HepG2 (cell line): ENCODE measurements at regions of chr10 and their contacts with region 1.

Region 1: DNA sequence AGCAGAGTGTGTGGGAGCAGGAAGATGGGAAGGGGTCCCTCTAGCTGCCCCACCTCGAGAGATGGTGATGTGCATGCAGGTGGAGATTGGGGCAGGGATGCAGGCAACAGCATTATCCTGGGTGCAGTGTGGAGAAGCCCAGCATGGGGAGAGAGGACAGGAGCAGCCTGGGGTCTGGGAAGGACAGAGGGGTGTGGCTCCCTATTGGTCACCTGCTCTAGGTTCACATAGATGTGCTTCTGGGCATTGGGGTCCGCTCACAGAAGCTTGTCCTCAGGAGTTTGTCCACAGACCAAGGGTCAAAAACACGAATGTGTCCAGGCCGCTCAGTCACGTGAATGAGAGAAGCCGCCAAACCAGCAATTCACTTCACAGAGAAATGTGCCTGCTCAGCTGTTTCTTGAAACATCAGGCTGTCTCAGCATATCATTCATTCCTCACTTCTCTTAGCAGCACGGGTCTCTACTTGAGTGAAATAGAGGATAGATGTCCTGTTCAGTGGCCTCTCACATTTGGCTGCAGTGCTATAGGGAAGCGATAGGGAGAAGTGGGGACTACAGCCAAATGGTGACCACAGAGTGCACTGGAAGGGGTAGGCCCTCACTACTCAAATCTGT is 11.5 kb upstream of the SLC29A3 start:
- DNase-seq: no peak
- ATAC-seq: no peak; the same call in 2 of the 3 replicates
- H3K4me3 ChIP-seq: no peak overlapping the region
- H3K27ac ChIP-seq: no peak overlapping the region
- H3K4me1 ChIP-seq: peaks cover 20% of the 10 kb centered on the region; the same call in 1 of the 2 replicates
- H3K27me3 ChIP-seq: peaks cover 3 to 4% of the 10 kb centered on the region in 2 experiments; a peak in 2 of 5 replicates
- CTCF ChIP-seq: no peak
- EP300 ChIP-seq: no peak
- POLR2A ChIP-seq: no peak
- RAD21 ChIP-seq: no peak

Region 2: GRCh38 chr10:71094712-71095390 is 212.7 kb before region 1 on chr10:
- CTCF ChIA-PET with region 1: no interaction called
- POLR2A ChIA-PET with region 1: no interaction called
- in situ Hi-C with region 1: no loop called
- intact Hi-C with region 1: no loop called
- DNase-seq: no peak
- ATAC-seq: no peak
- H3K4me3 ChIP-seq: no peak overlapping the region
- H3K27ac ChIP-seq: no peak overlapping the region
- H3K4me1 ChIP-seq: no peaks in the 10 kb centered on the region
- H3K27me3 ChIP-seq: peaks cover 1 to 9% of the 10 kb centered on the region in 2 experiments; a peak in 2 of 5 replicates
- CTCF ChIP-seq: no peak
- EP300 ChIP-seq: no peak
- POLR2A ChIP-seq: no peak
- RAD21 ChIP-seq: no peak

Region 3: DNA sequence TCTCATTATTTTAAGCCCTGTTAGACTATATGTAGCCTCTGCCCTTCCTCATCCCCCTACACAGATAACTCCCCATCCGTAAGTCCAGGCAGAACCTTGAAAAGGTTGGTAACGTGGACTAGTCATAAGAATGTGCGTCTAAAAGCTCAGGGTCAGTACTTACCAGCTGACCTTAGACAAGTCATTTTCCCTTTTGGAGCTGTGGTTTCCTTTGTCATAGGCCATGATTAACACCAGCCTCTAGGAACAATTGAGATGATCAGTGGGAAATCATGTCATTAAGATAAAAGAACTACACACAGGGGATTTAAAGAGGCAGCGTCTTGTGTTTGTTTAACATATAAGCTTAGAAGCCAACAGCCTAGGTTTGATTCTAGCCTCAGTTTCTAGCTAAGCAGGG is 102.1 kb before region 1 on chr10:
- CTCF ChIA-PET with region 1: no interaction called
- POLR2A ChIA-PET with region 1: no interaction called
- in situ Hi-C with region 1: no loop called
- intact Hi-C with region 1: no loop called
- DNase-seq: no peak
- ATAC-seq: no peak
- H3K4me3 ChIP-seq: no peak overlapping the region
- H3K27ac ChIP-seq: no peak overlapping the region
- H3K4me1 ChIP-seq: no peaks in the 10 kb centered on the region
- H3K27me3 ChIP-seq: peaks cover 5 to 20% of the 10 kb centered on the region in 2 experiments; a peak in 3 of 5 replicates
- CTCF ChIP-seq: no peak
- EP300 ChIP-seq: no peak
- POLR2A ChIP-seq: no peak
- RAD21 ChIP-seq: no peak

Region 4: GRCh38 chr10:71684356-71685173 is 377.0 kb after region 1 on chr10:
- CTCF ChIA-PET with region 1: no interaction called
- POLR2A ChIA-PET with region 1: no interaction called
- in situ Hi-C with region 1: no loop called
- intact Hi-C with region 1: no loop called
- DNase-seq: no peak
- ATAC-seq: no peak
- H3K4me3 ChIP-seq: no peak overlapping the region
- H3K27ac ChIP-seq: no peak overlapping the region
- H3K4me1 ChIP-seq: no peaks in the 10 kb centered on the region
- H3K27me3 ChIP-seq: peaks cover 4 to 8% of the 10 kb centered on the region in 2 experiments; a peak in 3 of 5 replicates
- CTCF ChIP-seq: no peak
- EP300 ChIP-seq: no peak
- POLR2A ChIP-seq: no peak
- RAD21 ChIP-seq: no peak

Region 5: DNA sequence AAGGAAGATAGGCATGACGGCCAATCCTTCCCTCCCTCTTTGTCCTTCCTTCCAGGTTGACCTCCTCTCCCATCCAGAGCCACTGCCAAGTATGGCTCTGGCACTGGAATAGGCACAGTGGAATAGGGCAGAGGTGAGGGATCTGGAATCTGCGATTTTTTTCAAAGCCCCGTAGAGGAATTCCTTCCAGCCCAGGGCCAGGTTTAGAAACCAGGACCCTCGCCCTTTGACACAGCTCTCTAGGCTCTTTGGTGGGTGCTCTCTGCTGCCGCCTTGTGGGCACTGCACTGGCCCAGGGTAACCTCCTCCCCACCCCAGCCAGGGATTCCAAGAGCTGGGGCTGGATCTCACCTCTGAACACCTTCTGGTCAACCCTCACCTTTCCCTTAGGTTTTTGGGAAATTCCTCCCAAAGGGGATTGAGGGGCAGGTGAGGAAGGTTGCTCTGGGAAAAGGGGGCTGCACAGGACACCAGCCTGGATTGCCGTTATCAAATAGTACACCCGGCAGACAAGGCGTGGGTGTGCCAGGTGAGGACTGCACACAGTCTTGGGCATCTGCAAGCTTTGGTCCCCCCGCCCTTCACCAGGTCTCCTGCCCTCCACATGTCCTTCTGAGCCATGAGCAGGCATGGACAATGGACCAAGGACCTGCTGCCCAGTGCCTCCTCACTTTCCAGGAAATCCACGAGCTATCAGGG is 389.2 kb after region 1 on chr10:
- CTCF ChIA-PET with region 1: no interaction called
- POLR2A ChIA-PET with region 1: no interaction called
- in situ Hi-C with region 1: loop called (anchors 5 kb)
- intact Hi-C with region 1: no loop called
- DNase-seq: peak; percentile 33
- ATAC-seq: peak; percentile 88
- H3K4me3 ChIP-seq: no peak overlapping the region
- H3K27ac ChIP-seq: no peak overlapping the region
- H3K4me1 ChIP-seq: peaks cover 17% of the 10 kb centered on the region
- H3K27me3 ChIP-seq: peaks cover 0 to 37% of the 10 kb centered on the region in 2 experiments; a peak in 3 of 5 replicates
- CTCF ChIP-seq: peak; percentile 83
- EP300 ChIP-seq: no peak
- POLR2A ChIP-seq: no peak
- RAD21 ChIP-seq: peak; percentile 60